ENCODE measurements at regions of chr3 and their contacts with region 1.

Region 1: DNA sequence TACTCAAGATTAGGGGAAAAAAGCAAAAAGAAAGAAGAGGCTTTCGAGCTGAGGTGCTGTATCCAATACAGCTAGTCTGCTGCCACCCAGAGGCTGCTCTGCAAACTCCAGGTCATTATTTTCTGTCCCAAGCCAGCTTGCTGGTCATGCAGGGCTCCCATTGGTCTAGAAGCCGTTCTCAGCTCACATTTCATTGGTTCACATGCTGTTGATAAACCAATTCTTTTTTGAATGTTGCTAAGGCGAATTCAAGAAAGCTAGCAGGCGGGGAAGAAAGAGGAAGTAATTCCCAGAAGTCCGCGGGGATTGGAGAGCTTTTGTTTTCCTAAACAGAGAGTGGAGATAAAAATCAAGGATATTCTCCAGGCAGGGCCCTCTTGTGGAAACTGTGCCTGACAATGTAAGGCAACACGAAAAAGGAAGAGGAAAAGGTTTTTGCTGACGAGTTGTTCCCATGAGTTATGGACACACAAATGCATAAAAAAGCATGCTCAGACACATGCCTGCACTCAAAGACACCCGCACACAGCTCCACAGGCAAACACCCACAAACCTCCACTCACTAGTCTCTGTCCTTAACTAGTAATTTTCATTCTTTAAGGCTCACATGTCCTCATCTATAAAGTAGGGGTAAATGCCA is 33.4 kb downstream of the FSTL1 start:
- DNase-seq: peak; percentile 97
- H3K4me3 ChIP-seq: peak overlapping the region; percentile 25
- H3K27ac ChIP-seq: peak overlapping the region; percentile 53
- H3K4me1 ChIP-seq: peaks cover 17% of the 10 kb centered on the region
- H3K27me3 ChIP-seq: no peaks in the 10 kb centered on the region
- CTCF ChIP-seq: peak; percentile 95

Region 2: DNA sequence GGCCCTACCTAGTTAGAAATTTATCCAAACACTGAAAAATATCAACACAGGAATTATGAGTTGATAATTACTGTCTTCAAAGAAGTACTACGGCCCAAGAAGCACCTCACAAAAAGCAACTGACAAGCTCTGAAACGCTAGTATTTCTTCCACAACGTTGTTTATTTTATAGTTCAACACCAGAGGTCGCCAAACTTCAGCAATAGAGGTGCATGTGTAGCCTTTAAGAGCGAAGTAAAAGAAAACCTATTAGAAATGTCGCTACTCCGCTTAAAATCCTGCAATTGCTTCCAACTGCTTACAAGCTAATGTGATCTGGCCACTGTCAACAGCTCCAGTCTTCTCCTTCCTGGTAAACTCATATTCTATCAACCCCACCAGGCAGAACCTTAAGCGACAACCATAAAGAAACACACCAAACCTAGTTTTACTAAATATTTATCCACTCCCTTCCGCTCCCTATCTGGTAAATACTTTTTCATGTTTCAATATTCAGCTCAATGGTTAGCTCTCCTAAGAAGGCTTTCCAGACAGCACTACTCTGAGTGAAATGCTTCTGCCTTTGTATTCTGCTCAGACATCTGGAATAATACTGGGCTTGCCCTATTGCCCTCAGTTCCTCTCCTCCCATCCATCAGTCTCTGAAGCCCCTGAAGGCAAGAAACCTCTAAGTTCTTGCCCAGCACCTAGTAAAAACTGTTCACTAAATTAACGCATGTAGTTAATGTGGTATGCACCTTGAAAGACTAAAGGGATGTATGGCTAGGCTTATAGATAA is 525.3 kb before region 1 on chr3:
- CTCF ChIA-PET with region 1: interaction called, 10 read pairs
- POLR2A ChIA-PET with region 1: no interaction called
- intact Hi-C with region 1: loop called (anchors 2 kb)
- DNase-seq: peak; percentile 83
- H3K4me3 ChIP-seq: no peak overlapping the region
- H3K27ac ChIP-seq: no peak overlapping the region
- H3K4me1 ChIP-seq: no peaks in the 10 kb centered on the region
- H3K27me3 ChIP-seq: no peaks in the 10 kb centered on the region
- CTCF ChIP-seq: peak; percentile 78

Region 3: DNA sequence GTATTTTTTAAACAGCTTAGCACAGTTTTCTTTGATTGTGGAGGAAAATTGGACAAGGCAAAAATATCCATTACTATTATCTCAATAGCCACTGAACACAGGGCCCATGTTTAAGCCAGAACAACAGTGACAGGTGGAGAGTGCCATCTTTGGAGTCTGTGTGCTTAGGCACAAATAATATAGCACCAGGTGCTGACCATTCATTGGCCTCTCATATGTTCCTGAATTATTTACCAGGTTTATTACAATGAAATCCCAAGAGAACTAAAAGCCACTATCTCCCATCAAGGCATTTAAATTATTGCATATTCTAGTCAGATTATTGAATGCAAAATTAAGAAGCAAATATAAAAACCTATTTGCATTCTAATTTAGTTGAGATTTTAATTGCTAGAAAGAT is 172.0 kb before region 1 on chr3:
- CTCF ChIA-PET with region 1: interaction called, 16 read pairs
- POLR2A ChIA-PET with region 1: no interaction called
- intact Hi-C with region 1: loop called (anchors 1 kb)
- DNase-seq: no peak
- H3K4me3 ChIP-seq: no peak overlapping the region
- H3K27ac ChIP-seq: no peak overlapping the region
- H3K4me1 ChIP-seq: no peaks in the 10 kb centered on the region
- H3K27me3 ChIP-seq: no peaks in the 10 kb centered on the region
- CTCF ChIP-seq: no peak

Region 4: GRCh38 chr3:120506828-120507774 is 89.7 kb after region 1 on chr3:
- CTCF ChIA-PET with region 1: interaction called, 5 read pairs
- POLR2A ChIA-PET with region 1: no interaction called
- intact Hi-C with region 1: loop called (anchors 1 kb)
- DNase-seq: peak; percentile 75
- H3K4me3 ChIP-seq: no peak overlapping the region
- H3K27ac ChIP-seq: no peak overlapping the region
- H3K4me1 ChIP-seq: no peaks in the 10 kb centered on the region
- H3K27me3 ChIP-seq: no peaks in the 10 kb centered on the region
- CTCF ChIP-seq: peak; percentile 83

Region 5: GRCh38 chr3:120713262-120713661 is 295.9 kb after region 1 on chr3:
- CTCF ChIA-PET with region 1: no interaction called
- POLR2A ChIA-PET with region 1: no interaction called
- intact Hi-C with region 1: no loop called
- DNase-seq: no peak
- H3K4me3 ChIP-seq: no peak overlapping the region
- H3K27ac ChIP-seq: no peak overlapping the region
- H3K4me1 ChIP-seq: no peaks in the 10 kb centered on the region
- H3K27me3 ChIP-seq: no peaks in the 10 kb centered on the region
- CTCF ChIP-seq: no peak

Region 6: GRCh38 chr3:120795017-120795648 is 377.7 kb after region 1 on chr3:
- CTCF ChIA-PET with region 1: no interaction called
- POLR2A ChIA-PET with region 1: no interaction called
- intact Hi-C with region 1: loop called (anchors 5 kb)
- DNase-seq: peak; percentile 84
- H3K4me3 ChIP-seq: no peak overlapping the region
- H3K27ac ChIP-seq: no peak overlapping the region
- H3K4me1 ChIP-seq: no peaks in the 10 kb centered on the region
- H3K27me3 ChIP-seq: no peaks in the 10 kb centered on the region
- CTCF ChIP-seq: peak; percentile 94

Measured in A673 (cell line).